Left cardiac atrium (tissue), 4 donors: ENCODE measurements at regions of chr12 and their contacts with region 1.

Region 1: GRCh38 chr12:48618541-48618940 is 48.7 kb upstream of the LALBA start:
- DNase-seq: peak; percentile 64
- ATAC-seq: peak; percentile 64 to 67

Region 2: GRCh38 chr12:48183091-48183875 is 435.3 kb before region 1 on chr12 and contains the start of gene CCDC184:
- intact Hi-C with region 1: loop called in 1 of 2 experiments (anchors 10 kb)
- DNase-seq: peak; percentile 72
- ATAC-seq: peak; percentile 74 to 87
- total RNA-seq, gene CCDC184: 1.2 to 1.4 TPM

Region 3: DNA sequence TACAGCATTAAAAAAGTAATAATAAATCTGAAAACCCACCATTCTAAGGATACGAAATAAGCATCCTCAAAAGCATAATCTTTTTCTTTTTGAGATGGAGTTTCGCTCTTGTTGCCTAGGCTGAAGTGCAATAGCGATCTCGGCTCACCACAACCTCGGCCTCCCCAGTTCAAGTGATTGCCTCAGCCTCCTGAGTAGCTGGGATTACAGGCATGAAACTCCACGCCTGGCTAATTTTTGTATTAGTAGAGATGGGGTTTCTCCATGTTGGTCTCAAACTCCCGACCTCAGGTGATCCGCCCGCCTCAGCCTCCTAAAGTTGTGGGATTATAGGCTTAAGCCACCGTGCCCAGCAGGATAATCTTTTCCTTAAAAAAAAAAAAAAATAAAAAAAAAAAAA is 93.7 kb after region 1 on chr12:
- intact Hi-C with region 1: no loop called
- DNase-seq: no peak
- ATAC-seq: no peak

Region 4: DNA sequence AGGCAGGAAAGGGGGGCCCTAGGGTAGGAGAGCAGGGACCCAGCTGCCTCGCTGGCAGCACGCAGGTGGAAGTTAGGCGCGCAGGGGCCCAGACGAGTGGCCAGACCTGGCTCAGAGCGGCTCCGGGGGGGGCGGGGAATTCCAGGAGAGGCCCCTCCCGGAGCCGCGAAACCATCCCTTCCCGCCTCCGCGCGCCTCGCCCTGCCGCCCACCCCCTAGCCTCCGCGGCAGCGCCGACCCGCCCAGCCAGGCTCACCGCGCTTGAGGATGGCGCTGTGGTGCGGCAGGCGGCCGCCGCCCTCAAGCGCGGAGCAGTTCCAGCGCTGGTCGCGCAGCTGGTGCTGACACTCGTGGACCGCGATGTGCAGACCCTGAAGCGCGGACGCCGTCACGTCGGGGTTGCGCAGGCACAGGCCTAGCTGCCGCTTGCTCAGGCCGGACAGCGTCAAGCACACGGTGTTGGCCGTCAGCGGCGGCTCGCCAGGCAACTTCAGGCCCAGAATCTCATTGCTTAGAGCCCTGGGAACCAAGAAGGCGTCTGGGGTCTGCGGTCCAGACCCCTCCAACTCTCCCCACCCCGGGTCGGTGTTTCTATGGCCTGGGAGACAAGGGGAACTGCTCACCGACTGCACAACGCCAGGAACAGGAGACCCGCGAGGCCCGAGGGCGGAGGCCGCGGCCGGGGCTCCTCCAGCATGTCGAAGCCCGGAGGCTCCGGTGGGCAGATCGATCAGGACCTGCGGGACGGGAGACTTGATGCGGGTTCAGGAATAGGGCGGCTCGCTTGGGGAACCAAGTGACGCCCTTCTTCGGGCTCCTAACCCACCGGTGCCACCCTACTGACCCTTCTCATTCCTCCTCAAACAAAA is 351.5 kb after region 1 on chr12:
- intact Hi-C with region 1: no loop called
- DNase-seq: peak; percentile 34
- ATAC-seq: peak; percentile 32